ENCODE measurements at regions of chr11 and their contacts with region 1.

Region 1: DNA sequence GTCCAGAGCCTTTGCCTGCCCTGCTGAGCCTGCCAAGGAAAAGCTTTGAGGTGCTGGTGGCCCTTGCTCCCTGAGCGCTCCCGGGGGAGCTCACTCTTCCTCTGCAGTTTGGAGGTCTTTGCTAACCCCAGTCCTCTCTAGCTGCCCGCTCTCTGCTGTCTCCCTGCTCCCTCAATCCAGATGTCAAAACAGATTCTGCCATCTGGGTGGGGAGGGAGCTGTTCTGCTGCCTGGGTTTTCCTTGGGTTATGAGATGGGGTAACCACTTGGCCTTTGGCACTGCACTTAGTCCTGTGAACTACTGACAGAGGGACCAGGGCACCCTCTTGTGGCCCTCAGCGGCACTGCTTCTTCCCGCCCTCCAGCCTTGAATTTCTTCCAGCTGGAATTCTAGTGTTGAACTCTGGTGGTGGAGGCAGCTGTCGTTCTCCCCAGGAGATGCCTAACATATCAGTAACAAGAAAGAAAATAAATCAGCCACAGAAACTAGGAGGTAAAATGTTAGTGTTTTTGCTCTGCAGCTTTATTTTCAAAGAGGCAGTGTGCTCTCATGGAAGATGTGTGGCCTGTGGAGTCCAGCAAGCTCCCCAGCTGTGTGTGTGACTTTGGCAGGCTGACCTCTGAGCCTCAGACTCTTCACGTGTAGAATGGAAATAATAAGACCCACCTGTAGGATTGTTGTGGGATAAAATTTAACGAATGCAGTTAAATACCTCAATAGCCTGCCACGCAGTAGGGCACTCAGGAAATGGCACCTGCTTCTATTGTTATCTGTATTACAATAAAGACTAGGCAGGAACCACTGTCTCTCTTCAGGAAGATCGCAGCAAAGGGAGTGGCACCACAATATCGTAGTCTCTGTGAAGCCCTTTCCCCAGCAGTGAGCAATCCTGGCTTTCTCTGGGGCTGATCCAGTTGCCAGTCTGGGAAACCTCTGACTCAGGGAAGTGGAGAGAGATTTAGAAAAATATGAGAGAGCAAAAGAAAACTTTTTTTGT is 23.4 kb downstream of the ARFGAP2 start:
- DNase-seq: peak; percentile 77 to 80
- ATAC-seq: peak; percentile 54 to 85 (median 78)
- H3K4me3 ChIP-seq: no peak overlapping the region
- H3K27ac ChIP-seq: peak overlapping the region in 1 of 10 donors; percentile 58
- H3K4me1 ChIP-seq: peaks cover 4 to 34% (median 18%) of the 10 kb centered on the region in 9 donors
- H3K27me3 ChIP-seq: no peaks in the 10 kb centered on the region
- CTCF ChIP-seq: peak; percentile 87 to 97 (median 94)

Region 2: GRCh38 chr11:46778416-46778815 is 374.8 kb before region 1 on chr11:
- intact Hi-C with region 1: no loop called
- DNase-seq: no peak
- ATAC-seq: no peak
- H3K4me3 ChIP-seq: no peak overlapping the region
- H3K27ac ChIP-seq: no peak overlapping the region
- H3K4me1 ChIP-seq: no peaks in the 10 kb centered on the region
- H3K27me3 ChIP-seq: no peaks in the 10 kb centered on the region
- CTCF ChIP-seq: no peak

Region 3: GRCh38 chr11:46889689-46890475 is 263.4 kb before region 1 on chr11:
- intact Hi-C with region 1: loop called (anchors 1 to 5 kb)
- DNase-seq: peak in 1 of 2 donors; percentile 76
- ATAC-seq: peak; percentile 46 to 86 (median 77)
- H3K4me3 ChIP-seq: no peak overlapping the region
- H3K27ac ChIP-seq: no peak overlapping the region
- H3K4me1 ChIP-seq: no peaks in the 10 kb centered on the region
- H3K27me3 ChIP-seq: no peaks in the 10 kb centered on the region
- CTCF ChIP-seq: peak; percentile 65 to 90 (median 84)

Region 4: DNA sequence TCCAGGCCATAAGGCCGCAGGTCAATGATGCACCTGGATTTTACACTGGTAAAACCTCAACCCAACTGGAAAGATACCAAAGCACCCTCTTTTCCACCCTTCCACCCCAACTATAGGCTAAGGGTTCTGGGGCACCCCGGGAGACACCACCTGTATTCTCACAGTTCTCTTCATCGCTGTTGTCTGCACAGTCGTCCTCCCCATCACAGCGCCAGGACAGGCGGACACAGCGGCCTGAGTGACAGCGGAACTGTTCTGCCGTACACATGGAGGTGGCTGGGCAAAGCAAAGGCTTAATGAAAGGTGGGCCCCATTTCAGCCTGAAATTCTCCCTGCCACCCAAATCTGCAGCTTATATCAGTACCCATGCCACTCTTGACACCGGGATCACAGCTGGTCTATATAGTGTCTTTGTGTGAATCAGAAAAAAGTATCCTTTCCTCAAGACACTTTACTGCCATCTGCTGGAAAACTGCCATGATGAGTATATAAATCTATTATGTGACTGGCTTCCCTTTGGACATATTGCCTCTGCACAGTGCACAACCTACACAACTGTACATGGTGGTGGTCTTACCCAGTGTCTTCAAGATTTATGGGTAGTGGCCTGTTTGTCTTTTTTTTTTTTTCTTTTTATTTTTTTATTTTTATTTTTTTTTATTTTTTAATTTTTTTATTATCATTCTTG is 256.4 kb before region 1 on chr11:
- intact Hi-C with region 1: loop called in 3 of 10 experiments (anchors 2 to 5 kb)
- DNase-seq: no peak
- ATAC-seq: peak in 5 of 8 donors; percentile 4 to 55 (median 11)
- H3K4me3 ChIP-seq: no peak overlapping the region
- H3K27ac ChIP-seq: no peak overlapping the region
- H3K4me1 ChIP-seq: peaks cover 0 to 21% (median 2%) of the 10 kb centered on the region in 9 donors
- H3K27me3 ChIP-seq: no peaks in the 10 kb centered on the region
- CTCF ChIP-seq: peak in 4 of 9 donors; percentile 13 to 29 (median 23)

Region 5: DNA sequence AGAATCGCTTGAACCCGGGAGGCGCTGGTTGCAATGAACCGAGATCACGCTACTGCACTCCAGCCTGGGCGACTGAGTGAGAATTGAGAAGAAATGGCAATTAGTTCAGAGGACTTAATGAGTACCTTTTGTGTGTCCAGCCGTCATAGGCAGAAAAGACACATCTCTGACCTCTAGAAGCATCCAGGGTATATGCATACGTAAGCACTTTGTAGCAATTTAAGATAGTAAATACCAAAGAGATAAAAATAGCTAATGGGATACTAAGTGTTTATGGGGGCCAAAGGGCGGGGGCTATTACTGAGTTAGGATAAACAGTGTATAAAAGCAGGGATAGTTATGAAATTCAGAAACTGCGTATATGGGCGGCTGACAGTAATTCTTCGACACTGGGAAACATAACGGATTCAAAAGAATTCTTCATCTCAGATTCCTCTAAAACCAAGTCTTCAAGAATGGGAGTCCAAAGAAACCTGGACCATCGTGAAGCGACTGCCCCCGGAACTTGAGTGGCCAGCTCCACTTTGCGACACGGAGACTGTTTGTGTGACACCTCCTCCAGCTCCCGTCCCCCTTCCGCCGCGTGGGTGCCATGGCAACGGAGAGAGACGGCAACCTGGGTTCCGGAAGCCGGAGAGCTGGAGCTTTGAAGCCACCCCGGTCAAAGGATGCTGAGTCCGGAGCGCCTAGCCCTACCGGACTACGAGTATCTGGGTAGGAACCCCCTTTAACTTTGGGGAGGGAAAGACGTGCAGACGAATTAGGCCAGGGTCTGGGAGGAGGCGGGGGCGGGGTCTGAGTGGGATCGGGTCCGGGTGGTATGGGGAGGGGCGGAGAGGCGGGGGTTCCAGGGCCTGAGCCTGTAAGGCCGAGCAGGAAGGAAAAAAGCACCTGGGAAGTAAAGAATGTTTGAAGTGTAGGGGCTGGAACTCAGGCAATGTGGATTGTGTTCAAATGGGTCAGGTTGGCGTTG is 216.8 kb before region 1 on chr11 and contains the start of gene CSTPP1:
- intact Hi-C with region 1: loop called in 1 of 10 experiments (anchors 5 kb)
- DNase-seq: peak; percentile 92
- ATAC-seq: peak; percentile 93 to 100 (median 96)
- H3K4me3 ChIP-seq: peak within 1 kb of the TSS; percentile 33 to 73 (median 62)
- H3K27ac ChIP-seq: peak within 1 kb of the TSS in 7 of 10 donors; percentile 38 to 67 (median 54)
- H3K4me1 ChIP-seq: peaks cover 0 to 18% (median 10%) of the 10 kb centered on the region in 9 donors
- H3K27me3 ChIP-seq: peaks cover 0 to 5% (median 0%) of the 10 kb centered on the region in 7 donors
- CTCF ChIP-seq: no peak
- total RNA-seq, gene CSTPP1: 12.7 to 19.4 (median 16.7) TPM

Region 6: DNA sequence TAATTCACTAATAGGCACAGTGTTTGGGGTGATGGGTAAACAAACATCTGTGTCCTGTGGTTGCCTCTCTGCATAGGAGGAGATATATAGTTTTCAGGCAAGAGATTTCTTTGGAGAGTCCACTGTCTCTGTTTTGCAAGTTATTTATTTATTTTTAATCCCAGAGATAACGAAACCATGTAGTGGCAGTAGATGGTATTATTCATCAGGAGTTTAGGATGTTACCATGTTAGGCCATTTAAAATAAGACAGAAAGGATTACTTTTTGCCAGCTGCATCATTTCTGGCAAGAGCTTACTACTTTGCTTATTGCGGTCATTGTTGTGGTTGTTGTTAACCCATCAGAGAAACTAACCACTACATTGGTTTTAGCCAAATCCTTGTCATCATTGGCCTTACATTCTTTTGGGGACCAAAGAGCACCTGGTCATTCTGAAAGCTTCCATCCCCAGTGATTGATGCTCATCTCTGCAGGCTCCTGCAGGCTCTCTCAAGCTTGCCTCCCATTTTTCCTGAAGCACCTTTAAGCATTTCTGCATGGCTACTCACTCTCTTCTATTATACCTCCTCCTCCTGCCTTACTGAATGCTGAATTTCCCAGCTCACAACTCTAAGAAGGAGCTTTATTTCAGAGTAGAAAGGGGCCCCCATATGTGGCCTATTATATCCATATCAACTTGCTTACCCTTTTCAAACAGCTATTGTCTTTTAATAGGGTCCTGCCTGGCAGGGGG is 132.3 kb before region 1 on chr11:
- intact Hi-C with region 1: no loop called
- DNase-seq: no peak
- ATAC-seq: no peak
- H3K4me3 ChIP-seq: no peak overlapping the region
- H3K27ac ChIP-seq: no peak overlapping the region
- H3K4me1 ChIP-seq: no peaks in the 10 kb centered on the region
- H3K27me3 ChIP-seq: no peaks in the 10 kb centered on the region
- CTCF ChIP-seq: no peak

Region 7: DNA sequence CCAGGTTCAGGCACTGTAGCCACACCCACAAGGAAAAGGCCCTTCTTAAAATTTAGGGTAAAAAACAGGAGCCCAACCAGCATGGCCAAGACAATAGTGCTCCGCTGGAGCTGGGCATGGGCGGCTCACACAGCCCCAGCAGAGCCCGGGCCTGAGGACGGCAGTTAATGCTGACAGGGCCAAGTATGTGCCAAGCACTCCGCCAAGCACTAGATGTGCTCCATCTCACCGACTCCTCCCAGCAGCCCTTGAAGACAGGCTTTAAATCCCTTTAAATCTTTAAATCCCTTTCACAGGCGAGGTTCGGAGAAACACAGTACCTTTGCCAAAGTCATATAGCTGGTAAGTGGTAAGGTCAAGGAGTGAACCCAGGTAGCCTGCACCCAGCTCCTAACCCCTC is 18.6 kb after region 1 on chr11:
- intact Hi-C with region 1: no loop called
- DNase-seq: peak in 1 of 2 donors; percentile 33
- ATAC-seq: peak in 3 of 8 donors; percentile 21 to 55 (median 45)
- H3K4me3 ChIP-seq: no peak overlapping the region
- H3K27ac ChIP-seq: peak overlapping the region in 4 of 10 donors; percentile 17 to 22 (median 20)
- H3K4me1 ChIP-seq: peaks cover 12 to 46% (median 37%) of the 10 kb centered on the region in 9 donors
- H3K27me3 ChIP-seq: no peaks in the 10 kb centered on the region
- CTCF ChIP-seq: no peak